Right lobe of liver (tissue), 6 donors: ENCODE measurements at regions of chr3 and their contacts with region 1.

Region 1: GRCh38 chr3:182837855-182838454 is 44.7 kb downstream of the ATP11B start:
- DNase-seq: no peak
- ATAC-seq: peak; percentile 46 to 68 (median 58)
- H3K4me3 ChIP-seq: no peak overlapping the region
- H3K27ac ChIP-seq: no peak overlapping the region
- H3K4me1 ChIP-seq: no peaks in the 10 kb centered on the region
- H3K27me3 ChIP-seq: no peaks in the 10 kb centered on the region
- CTCF ChIP-seq: peak; percentile 51 to 62 (median 58)
- POLR2A ChIP-seq: no peak

Region 2: DNA sequence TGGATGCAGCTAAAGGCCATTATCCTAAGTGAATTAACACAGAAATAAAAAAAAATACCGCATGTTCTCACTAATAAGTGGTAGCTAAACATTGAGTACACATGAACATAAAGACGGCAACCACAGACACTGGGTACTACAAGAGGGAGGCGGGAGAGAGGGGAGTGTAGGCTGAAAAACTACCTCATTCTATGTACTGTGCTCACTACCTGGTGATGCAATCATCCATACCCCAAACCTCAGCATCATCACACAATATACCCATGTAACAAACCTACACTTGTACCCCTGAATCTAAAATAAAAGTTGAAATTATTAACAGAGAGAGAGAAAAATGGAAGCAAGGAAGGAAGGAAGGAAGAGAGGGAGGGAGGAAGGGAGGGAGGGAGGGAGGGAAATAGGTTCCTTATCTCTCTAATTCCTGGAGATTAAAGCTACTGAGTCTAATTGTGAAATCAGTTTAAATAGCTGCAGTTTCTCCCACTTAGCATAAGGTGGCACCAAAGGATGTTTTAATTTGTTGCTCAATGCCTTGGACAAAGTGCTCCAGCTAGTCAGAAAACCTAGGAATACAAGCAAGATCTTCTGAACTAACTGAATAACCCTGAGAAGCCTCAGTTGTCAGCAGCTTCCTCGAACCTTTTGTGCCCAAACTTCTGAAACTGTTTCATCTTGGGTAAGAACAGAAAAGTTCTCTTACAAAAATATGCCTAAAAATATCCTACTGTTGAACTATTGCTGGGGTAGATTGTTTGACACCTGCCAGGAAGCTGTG is 124.0 kb before region 1 on chr3:
- intact Hi-C with region 1: loop called in 1 of 2 experiments (anchors 10 kb)
- DNase-seq: no peak
- ATAC-seq: peak; percentile 80 to 90 (median 82)
- H3K4me3 ChIP-seq: no peak overlapping the region
- H3K27ac ChIP-seq: no peak overlapping the region
- H3K4me1 ChIP-seq: peaks cover 0 to 25% (median 2%) of the 10 kb centered on the region in 4 donors
- H3K27me3 ChIP-seq: no peaks in the 10 kb centered on the region
- CTCF ChIP-seq: peak; percentile 53 to 73 (median 60)
- POLR2A ChIP-seq: no peak